Lower leg skin (tissue), 4 donors: ENCODE measurements at regions of chr10 and their contacts with region 1.

Region 1: DNA sequence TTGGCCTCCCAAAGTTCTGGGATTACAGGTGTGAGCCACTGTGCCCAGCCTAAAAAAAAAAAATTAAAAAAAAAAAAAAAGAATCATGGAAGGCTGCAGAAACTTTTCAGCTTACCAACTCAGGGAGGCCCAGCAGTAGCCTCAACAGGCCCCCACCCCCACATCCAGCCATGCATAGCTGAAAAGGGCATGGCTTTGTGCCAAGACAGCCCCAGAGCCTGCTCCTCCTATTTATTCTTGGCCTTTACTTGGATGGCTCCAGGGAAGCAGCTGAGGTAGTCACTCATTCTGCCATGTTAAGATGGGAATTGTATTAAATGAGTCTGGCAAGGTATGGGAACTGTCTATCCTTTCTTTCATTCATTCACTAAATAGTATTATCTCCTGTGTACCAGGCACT is 13.7 kb upstream of the CNNM2 start:
- DNase-seq: no peak
- H3K4me3 ChIP-seq: no peak overlapping the region
- CTCF ChIP-seq: no peak
- POLR2A ChIP-seq: no peak

Region 2: GRCh38 chr10:102835007-102835482 is 69.3 kb before region 1 on chr10:
- intact Hi-C with region 1: loop called (anchors 10 kb)
- DNase-seq: peak; percentile 69 to 94
- H3K4me3 ChIP-seq: no peak overlapping the region
- CTCF ChIP-seq: peak in 1 of 3 donors; percentile 72
- POLR2A ChIP-seq: no peak

Region 3: DNA sequence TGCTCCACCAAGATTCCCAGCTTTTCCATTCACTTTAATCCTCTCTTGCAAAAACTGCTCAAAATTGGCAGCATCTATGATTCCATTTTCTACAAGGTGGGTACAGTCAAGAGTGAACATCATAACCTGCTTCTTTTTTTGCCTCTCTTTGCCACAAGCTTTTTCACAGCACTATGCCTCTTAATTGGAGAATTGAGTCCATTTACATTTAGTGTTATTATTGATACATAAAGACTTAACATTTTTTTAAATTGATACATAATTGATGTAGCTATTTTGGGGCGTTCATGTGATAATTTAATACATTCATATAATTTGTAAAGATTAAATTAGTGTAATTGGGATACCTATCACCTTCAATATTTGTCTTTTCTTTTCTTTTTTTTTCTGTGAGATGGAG is 16.3 kb before region 1 on chr10:
- intact Hi-C with region 1: no loop called
- DNase-seq: no peak
- H3K4me3 ChIP-seq: no peak overlapping the region
- CTCF ChIP-seq: no peak
- POLR2A ChIP-seq: no peak

Region 4: DNA sequence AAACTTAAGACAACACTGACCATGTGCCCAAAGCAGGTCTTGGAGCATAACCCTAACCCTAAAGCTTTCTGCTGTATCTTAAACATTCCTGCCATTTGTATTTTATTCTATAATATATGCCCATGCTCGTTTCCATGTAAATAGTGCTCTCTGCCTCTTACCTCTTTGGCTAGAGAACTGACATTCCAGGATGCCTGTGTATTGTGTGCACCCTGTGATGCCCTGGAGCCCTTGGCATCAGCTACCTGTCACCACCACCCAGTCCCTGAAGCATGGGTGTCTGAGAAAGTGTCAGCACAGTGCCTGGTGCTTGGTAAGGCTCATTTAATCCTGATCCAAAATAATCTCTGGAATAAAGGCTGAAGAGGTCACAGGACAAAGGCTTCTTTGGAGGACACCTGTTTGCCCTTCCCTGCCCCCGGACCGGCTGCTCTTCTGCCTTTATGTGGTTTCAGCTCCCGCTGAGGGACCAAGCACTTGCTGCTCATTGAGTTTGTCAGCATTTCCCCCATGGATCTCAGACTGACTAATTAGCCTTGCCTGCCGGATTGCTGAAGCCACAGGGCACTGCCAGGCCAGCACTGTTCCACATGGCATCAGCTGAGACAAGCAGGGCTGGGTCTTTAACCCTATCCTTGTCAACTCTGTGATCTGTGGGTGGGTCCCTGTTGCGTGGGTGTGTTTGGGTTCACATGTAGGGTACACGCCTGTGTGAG is 1597.7 kb after region 1 on chr10:
- intact Hi-C with region 1: no loop called
- DNase-seq: peak in 1 of 2 donors; percentile 67
- H3K4me3 ChIP-seq: no peak overlapping the region
- CTCF ChIP-seq: no peak
- POLR2A ChIP-seq: no peak